ENCODE measurements at regions of chr4 and their contacts with region 1.

Region 1: GRCh38 chr4:55571806-55572205 is 20.2 kb downstream of the PDCL2 start:
- DNase-seq: no peak
- ATAC-seq: no peak
- H3K4me3 ChIP-seq: no peak overlapping the region
- H3K27ac ChIP-seq: no peak overlapping the region
- H3K4me1 ChIP-seq: no peaks in the 10 kb centered on the region
- H3K27me3 ChIP-seq: no peaks in the 10 kb centered on the region; the same call in 1 of the 2 replicates
- CTCF ChIP-seq: no peak
- POLR2A ChIP-seq: no peak
- RAD21 ChIP-seq: no peak

Region 2: GRCh38 chr4:55604996-55605395 is 33.2 kb after region 1 on chr4:
- CTCF ChIA-PET with region 1: no interaction called
- POLR2A ChIA-PET with region 1: no interaction called
- dilution Hi-C with region 1: no loop called
- in situ Hi-C with region 1: no loop called
- intact Hi-C with region 1: loop called (anchors 2 kb)
- DNase-seq: no peak
- ATAC-seq: no peak
- H3K4me3 ChIP-seq: no peak overlapping the region
- H3K27ac ChIP-seq: no peak overlapping the region
- H3K4me1 ChIP-seq: no peaks in the 10 kb centered on the region
- H3K27me3 ChIP-seq: no peaks in the 10 kb centered on the region; the same call in 1 of the 2 replicates
- CTCF ChIP-seq: no peak
- POLR2A ChIP-seq: no peak
- RAD21 ChIP-seq: no peak

Measured in IMR-90 (cell line).